ENCODE measurements at regions of chr18 and their contacts with region 1.

Region 1: DNA sequence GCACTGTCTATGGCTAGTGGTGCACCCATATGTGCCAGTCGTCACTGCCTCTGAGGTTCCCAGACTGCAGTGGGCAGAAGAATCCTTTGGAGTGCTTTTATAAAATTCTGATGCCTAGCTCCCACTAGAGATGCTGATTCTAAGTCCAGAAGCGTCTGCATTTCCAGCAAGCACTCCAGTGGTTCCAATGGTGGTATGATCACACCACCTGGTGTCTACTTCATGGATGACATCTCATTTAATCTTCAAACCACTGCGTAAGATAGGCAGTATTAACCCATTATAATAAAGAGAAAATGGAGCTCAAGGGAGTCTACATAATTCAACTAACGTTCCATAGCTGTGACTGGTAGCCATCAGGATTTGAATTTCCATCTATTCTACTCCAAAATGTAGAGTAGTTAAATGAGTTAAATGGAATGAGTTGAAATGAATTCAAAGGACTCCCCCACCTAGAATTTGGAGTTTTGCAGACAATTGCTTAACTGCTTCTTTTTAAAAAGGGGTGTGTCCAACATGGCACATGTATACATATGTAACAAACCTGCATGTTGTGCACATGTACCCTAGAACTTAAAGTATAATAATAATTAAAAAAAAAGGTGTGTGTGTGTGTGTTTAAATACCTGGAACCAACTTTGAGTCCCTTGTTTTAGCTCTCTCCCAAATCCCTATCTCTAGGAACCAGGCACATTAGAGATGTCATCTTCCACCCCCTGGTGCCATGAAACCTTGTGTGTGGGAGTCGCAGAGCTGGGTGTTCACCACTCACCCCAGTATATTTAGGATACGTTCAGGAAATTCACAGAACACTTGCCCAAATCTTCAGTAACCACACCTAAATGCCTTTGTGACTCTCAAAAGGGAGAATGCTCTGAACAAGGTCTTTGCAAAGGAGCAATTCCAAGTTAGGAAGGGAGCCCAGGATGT is 14.1 kb downstream of the LAMA3 start:
- DNase-seq: peak in 3 of 9 experiments; percentile 12 to 62 (median 53)
- ATAC-seq: peak; percentile 63
- H3K4me3 ChIP-seq: no peak overlapping the region
- H3K4me3 Mint-ChIP-seq: no peak overlapping the region
- H3K27ac ChIP-seq: no peak overlapping the region
- H3K27ac Mint-ChIP-seq: no peak overlapping the region
- H3K4me1 ChIP-seq: no peaks in the 10 kb centered on the region
- H3K4me1 Mint-ChIP-seq: no peaks in the 10 kb centered on the region
- H3K27me3 ChIP-seq: no peaks in the 10 kb centered on the region
- H3K27me3 Mint-ChIP-seq: peaks cover 15% of the 10 kb centered on the region
- CTCF ChIP-seq: no peak

Region 2: DNA sequence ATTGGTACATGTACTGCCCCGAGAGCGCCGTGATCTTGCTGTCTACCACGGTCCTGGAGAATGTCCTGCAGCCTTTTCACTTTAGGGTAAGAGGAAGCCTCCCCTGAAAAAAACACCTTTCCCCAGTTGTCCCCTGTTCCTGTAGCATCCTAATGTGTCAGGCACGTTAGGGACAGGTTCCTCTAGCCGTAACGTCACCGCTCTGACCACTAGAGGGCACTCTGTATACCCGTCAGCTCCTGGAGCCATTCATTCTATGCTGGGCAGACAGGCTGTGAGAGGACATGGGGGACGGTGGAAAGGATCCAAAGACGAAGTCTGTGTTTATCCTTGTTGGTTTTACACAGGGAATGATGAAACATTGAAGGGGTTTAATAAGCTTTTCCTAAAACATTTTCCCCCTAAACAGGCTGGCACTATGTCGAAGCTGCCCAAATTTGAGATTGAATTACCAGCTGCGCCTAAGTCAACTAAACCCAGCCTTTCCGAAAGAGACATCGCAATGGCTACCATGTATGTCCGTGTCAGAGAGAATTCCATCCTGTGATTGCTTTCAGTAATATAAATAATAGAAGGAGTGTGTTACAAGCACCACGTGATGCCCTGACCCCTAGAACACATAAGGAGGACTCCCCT is 187.3 kb before region 1 on chr18:
- CTCF ChIA-PET with region 1: interaction called, 7 read pairs
- POLR2A ChIA-PET with region 1: no interaction called
- intact Hi-C with region 1: loop called in 1 of 2 experiments (anchors 5 kb)
- DNase-seq: peak; percentile 49 to 87 (median 76)
- ATAC-seq: peak; percentile 99
- H3K4me3 ChIP-seq: no peak overlapping the region
- H3K4me3 Mint-ChIP-seq: no peak overlapping the region
- H3K27ac ChIP-seq: peak overlapping the region in 1 of 2 experiments; percentile 20
- H3K27ac Mint-ChIP-seq: peak overlapping the region; percentile 70
- H3K4me1 ChIP-seq: no peaks in the 10 kb centered on the region
- H3K4me1 Mint-ChIP-seq: peaks cover 15% of the 10 kb centered on the region
- H3K27me3 ChIP-seq: no peaks in the 10 kb centered on the region
- H3K27me3 Mint-ChIP-seq: no peaks in the 10 kb centered on the region
- CTCF ChIP-seq: peak; percentile 86

Region 3: DNA sequence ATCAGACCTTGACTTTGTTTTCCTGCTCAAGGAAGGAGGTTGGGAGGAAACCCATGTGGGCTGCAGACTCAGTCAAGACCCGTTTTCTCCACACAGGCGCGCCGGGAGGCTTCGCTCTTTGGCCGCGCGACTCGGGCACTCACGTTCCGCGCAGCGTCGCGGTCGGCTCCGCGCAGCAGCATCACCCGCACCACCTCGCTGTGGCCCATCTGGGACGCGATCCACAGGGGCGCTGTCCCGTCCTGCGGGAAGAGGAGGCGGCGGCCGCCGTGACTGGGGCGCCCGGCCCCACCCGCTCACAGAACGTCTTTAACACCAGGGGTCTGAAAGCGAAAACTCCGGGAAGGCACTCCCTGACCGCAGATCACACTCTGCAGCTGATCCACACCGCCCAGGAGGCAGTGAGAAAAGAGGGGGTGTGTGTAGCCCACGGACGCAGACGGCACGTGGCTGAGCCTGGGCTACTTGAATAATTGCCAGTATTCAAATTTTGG is 83.9 kb before region 1 on chr18:
- CTCF ChIA-PET with region 1: interaction called, 28 read pairs
- POLR2A ChIA-PET with region 1: no interaction called
- intact Hi-C with region 1: loop called in 1 of 2 experiments (anchors 1 kb)
- DNase-seq: peak in 2 of 9 experiments; percentile 27 to 47
- ATAC-seq: peak; percentile 36
- H3K4me3 ChIP-seq: peak overlapping the region; percentile 19 to 26
- H3K4me3 Mint-ChIP-seq: peak overlapping the region; percentile 72
- H3K27ac ChIP-seq: no peak overlapping the region
- H3K27ac Mint-ChIP-seq: no peak overlapping the region
- H3K4me1 ChIP-seq: no peaks in the 10 kb centered on the region
- H3K4me1 Mint-ChIP-seq: peaks cover 11% of the 10 kb centered on the region
- H3K27me3 ChIP-seq: peaks cover 11 to 15% of the 10 kb centered on the region in 2 experiments
- H3K27me3 Mint-ChIP-seq: peaks cover 39% of the 10 kb centered on the region
- CTCF ChIP-seq: no peak

Region 4: DNA sequence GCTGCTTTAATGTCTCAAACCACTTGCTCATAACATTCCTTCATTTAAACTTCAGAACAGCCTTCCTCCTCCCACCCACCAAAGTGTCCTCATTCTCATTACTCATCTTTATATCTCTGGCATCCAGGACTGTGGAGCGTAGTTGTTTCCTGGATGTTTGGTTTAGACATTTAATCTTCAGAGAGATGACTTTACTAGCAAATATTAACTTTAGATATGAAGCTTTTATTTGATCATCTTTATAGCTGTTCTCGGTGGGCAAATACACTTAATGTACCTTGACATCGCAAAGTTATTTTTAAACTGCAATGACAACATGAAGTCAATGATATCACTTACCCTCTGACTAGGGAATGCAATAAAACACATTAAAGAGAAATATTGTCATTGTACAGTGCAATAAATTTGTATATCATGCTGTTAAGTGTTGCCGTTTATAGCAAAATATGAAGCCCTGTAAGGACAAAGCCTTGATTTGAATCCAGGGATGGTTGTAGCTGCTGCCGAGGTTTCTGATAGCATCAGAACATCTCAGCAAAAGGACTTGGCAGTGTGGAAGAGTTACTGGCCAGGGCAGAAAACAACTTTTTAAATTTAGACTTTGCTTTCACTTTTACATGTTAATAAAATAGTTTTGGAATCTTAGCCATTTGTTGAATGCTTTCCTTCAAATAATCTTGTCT is 18.7 kb before region 1 on chr18:
- CTCF ChIA-PET with region 1: no interaction called
- POLR2A ChIA-PET with region 1: no interaction called
- intact Hi-C with region 1: no loop called
- DNase-seq: no peak
- ATAC-seq: no peak
- H3K4me3 ChIP-seq: no peak overlapping the region
- H3K4me3 Mint-ChIP-seq: no peak overlapping the region
- H3K27ac ChIP-seq: no peak overlapping the region
- H3K27ac Mint-ChIP-seq: no peak overlapping the region
- H3K4me1 ChIP-seq: peaks cover 7% of the 10 kb centered on the region
- H3K4me1 Mint-ChIP-seq: peaks cover 7% of the 10 kb centered on the region
- H3K27me3 ChIP-seq: peaks cover 9 to 20% of the 10 kb centered on the region in 2 experiments
- H3K27me3 Mint-ChIP-seq: peaks cover 49% of the 10 kb centered on the region
- CTCF ChIP-seq: no peak

Measured in CD8-positive, alpha-beta T cell (primary cell).